Activated CD8-positive, alpha-beta T cell treated with anti-CD3 and anti-CD28 coated beads for 36 hours (primary cell): ENCODE measurements at regions of chr19 and their contacts with region 1.

Region 1: GRCh38 chr19:43754503-43755255 is at the start of gene SMG9:
- DNase-seq: peak; percentile 97
- ATAC-seq: peak; percentile 85
- H3K4me3 Mint-ChIP-seq: peak within 1 kb of the TSS; percentile 90
- H3K27ac Mint-ChIP-seq: peak within 1 kb of the TSS; percentile 98
- H3K4me1 Mint-ChIP-seq: peaks cover 54% of the 10 kb centered on the region
- H3K27me3 Mint-ChIP-seq: no peaks in the 10 kb centered on the region
- CTCF ChIP-seq: no peak
- total RNA-seq, gene SMG9: 48.9 to 53.1 TPM

Region 2: GRCh38 chr19:43765109-43765876 is 10.6 kb after region 1 on chr19:
- CTCF ChIA-PET with region 1: interaction called, 71 read pairs
- POLR2A ChIA-PET with region 1: interaction called, 147 read pairs
- intact Hi-C with region 1: no loop called
- DNase-seq: peak; percentile 95
- ATAC-seq: peak; percentile 83
- H3K4me3 Mint-ChIP-seq: peak overlapping the region; percentile 43
- H3K27ac Mint-ChIP-seq: peak overlapping the region; percentile 95
- H3K4me1 Mint-ChIP-seq: peaks cover 66% of the 10 kb centered on the region
- H3K27me3 Mint-ChIP-seq: no peaks in the 10 kb centered on the region
- CTCF ChIP-seq: no peak

Region 3: DNA sequence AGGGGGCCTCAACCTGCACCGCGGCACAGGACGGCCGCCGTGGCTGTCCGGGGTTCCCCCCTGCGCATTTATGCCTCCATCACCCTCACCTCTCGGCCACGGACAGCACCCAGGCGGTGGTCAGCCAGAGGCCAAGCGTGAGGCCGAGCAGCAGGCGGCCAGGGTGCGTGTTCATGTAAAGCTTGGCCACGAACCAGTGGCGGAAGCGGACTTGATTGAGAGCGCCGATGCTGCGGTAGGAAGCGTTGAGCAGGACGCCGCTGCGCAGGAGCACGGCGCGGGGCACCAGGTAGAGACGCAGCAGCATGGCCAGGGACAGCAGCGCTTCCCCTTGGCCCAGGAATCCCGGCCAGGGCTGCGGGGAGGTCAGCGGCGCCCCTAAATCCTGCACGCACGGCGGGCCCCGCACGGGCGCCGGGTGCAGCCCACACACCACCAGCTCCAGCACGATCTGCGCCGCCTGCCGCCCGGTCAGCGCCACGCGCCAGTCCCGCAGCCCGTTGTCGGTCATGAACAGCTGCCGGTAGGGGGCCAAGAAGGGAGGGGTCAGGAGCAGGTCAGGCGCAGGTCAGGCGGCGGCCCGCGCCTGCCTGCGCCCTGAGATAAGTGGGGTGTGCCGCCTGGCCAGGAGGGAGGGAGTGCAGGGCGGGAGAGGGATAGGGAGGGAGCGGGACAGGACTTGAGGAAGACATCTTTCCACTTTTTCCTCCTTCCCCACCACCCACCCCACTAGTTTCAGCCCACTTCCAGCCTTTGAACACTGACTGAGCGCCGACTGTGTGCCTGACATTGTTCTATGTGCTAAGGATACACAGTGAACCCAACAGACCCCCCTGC is 19.6 kb after region 1 on chr19:
- CTCF ChIA-PET with region 1: interaction called, 5 read pairs
- POLR2A ChIA-PET with region 1: interaction called, 147 read pairs
- intact Hi-C with region 1: no loop called
- DNase-seq: no peak
- ATAC-seq: no peak
- H3K4me3 Mint-ChIP-seq: no peak overlapping the region
- H3K27ac Mint-ChIP-seq: no peak overlapping the region
- H3K4me1 Mint-ChIP-seq: peaks cover 31% of the 10 kb centered on the region
- H3K27me3 Mint-ChIP-seq: no peaks in the 10 kb centered on the region
- CTCF ChIP-seq: no peak

Region 4: DNA sequence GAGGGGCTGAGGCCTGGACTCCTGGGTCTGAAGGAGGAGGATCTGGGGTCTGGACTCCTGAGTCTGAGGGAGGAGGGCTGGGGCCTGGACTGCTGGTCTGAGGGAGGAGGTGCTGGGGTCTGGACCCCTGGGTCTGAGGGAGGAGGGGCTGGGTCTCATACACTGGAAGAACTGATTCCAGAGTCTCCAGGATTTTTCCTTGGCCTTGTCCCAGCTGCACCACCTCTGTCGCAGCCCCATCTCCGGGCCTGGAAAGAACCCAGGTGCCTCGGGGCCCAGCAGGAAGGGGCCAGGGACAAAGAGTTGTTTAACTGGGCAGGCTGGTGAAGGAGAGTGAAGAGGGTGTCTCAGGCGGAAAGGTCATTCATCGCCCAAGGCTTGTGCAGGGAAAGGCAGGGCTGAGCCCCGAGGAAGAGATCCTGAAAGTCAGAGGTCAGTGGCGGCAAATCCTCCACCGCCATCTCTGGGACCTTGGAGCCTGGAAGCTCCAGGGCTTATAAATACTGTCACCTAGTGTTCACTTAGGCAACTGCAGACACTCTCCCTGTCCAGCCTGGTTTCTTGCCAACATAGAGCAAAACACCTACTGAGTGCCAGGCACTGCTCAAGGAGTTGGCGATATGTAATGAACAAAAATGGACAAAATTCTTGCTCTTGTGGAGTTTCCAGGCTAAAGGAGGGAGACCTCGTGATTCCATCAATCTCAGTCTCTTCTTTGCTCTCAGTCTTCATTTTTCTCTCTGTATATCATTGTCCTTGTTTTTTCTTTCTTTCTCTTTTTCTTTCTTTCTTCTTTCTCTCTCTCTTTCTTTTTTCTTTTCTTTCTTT is 30.5 kb after region 1 on chr19:
- CTCF ChIA-PET with region 1: interaction called, 4 read pairs
- POLR2A ChIA-PET with region 1: interaction called, 137 read pairs
- intact Hi-C with region 1: no loop called
- DNase-seq: peak; percentile 71
- ATAC-seq: peak; percentile 23
- H3K4me3 Mint-ChIP-seq: peak overlapping the region; percentile 67
- H3K27ac Mint-ChIP-seq: peak overlapping the region; percentile 94
- H3K4me1 Mint-ChIP-seq: peaks cover 39% of the 10 kb centered on the region
- H3K27me3 Mint-ChIP-seq: peaks cover 6% of the 10 kb centered on the region
- CTCF ChIP-seq: peak; percentile 95

Region 5: DNA sequence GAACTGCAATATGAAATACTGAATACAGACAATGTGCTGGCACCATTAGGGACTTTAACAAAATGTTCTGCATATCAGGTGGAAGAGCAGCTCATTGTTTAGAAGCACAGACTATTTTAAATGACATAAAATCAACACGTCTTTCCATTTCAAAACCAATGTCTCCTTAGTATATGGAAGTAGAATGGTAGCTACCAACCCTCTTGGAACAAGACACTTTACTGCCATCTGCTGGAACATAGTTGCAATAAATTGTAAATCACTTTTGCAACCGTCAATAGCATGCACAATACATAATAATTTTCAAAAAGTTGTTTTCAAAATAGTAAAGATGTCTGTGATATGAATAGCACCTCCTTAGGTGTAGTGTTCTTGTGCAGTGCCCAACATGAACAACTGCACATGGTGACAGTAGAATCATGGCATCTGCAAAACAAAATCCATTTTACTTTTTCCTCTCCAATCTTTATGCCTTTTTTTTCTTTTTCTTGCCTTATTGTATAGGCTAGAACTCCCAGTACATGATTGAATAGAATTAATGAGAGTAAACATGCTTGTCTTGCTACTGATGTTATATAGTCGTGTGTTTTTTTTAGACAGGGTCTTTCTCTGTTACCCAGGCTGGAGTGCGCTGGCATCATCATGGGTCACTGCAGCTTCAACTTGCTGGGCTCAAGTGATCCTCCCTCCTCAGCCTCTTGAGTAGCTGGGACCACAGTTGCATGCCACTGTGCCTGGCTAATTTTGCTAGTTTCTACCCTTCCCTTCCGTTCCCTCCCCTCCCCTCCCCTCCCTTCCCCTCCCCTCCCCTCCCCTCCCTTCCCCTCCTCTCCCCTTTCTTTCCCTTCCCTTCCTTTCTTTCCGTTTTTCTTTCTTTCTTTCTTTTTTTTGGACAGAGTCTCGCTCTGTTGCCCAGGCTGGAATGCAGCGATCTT is 55.4 kb after region 1 on chr19:
- CTCF ChIA-PET with region 1: interaction called, 10 read pairs
- POLR2A ChIA-PET with region 1: no interaction called
- intact Hi-C with region 1: no loop called
- DNase-seq: no peak
- ATAC-seq: peak; percentile 70
- H3K4me3 Mint-ChIP-seq: no peak overlapping the region
- H3K27ac Mint-ChIP-seq: no peak overlapping the region
- H3K4me1 Mint-ChIP-seq: no peaks in the 10 kb centered on the region
- H3K27me3 Mint-ChIP-seq: peaks cover 7% of the 10 kb centered on the region
- CTCF ChIP-seq: peak; percentile 74